Natural killer cell (primary cell): ENCODE measurements at regions of chrX and their contacts with region 1.

Region 1: DNA sequence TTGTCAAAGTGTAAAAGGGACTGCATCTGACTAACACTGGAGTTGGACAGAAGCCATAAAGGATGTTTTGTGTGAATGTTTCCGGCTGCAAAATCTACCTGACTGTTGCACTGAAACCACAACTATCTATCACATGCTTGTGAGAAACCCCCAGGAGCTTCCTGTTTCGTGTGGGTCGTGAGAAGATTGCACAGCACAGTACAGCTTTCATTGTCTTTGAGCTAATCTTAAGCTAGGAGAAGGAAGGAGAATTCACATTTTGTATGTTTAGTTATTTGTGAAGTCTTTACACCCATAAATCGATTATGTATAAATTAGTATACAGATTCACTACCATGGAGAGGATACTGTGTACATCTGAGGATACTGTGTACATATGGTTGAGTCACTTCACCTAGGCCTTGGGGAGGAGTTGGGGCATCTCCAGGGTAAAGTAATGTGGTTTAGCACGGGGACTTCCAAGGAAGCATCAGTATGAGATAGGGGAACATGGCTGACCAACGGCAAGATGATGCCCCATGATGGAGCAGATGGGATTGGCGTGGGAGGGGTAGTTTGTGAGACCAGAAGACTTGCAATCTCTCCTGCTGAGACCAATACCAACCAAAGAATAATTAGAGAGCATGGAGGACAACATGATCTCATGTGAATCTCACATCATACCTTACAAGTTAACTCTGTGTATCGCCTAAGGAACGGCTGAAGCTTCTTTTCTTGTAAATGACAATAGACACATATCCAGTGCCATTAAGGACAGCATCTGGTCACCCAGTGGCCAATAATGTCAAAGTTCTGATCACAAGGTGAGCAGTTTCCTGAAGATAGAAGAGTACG is 43.1 kb upstream of the FAM9C start:
- DNase-seq: peak; percentile 42 to 91
- ATAC-seq: peak; percentile 69 to 86 (median 80)
- H3K4me3 ChIP-seq: no peak overlapping the region
- H3K4me3 Mint-ChIP-seq: peak overlapping the region; percentile 90
- H3K27ac ChIP-seq: peak overlapping the region; percentile 98
- H3K27ac Mint-ChIP-seq: peak overlapping the region; percentile 99
- H3K4me1 ChIP-seq: peaks cover 74% of the 10 kb centered on the region
- H3K4me1 Mint-ChIP-seq: peaks cover 72 to 84% of the 10 kb centered on the region in 2 donors
- H3K27me3 ChIP-seq: no peaks in the 10 kb centered on the region
- H3K27me3 Mint-ChIP-seq: no peaks in the 10 kb centered on the region
- CTCF ChIP-seq: no peak

Region 2: GRCh38 chrX:12955882-12956703 is 131.4 kb before region 1 on chrX:
- intact Hi-C with region 1: loop called (anchors 1 kb)
- DNase-seq: peak; percentile 64 to 77
- ATAC-seq: peak; percentile 54 to 73 (median 67)
- H3K4me3 ChIP-seq: peak overlapping the region; percentile 42
- H3K4me3 Mint-ChIP-seq: peak overlapping the region; percentile 87
- H3K27ac ChIP-seq: peak overlapping the region; percentile 99
- H3K27ac Mint-ChIP-seq: peak overlapping the region; percentile 95 to 96
- H3K4me1 ChIP-seq: peaks cover 85% of the 10 kb centered on the region
- H3K4me1 Mint-ChIP-seq: peaks cover 65 to 66% of the 10 kb centered on the region in 2 donors
- H3K27me3 ChIP-seq: no peaks in the 10 kb centered on the region
- H3K27me3 Mint-ChIP-seq: no peaks in the 10 kb centered on the region
- CTCF ChIP-seq: no peak

Region 3: GRCh38 chrX:13029341-13029740 is 58.2 kb before region 1 on chrX:
- intact Hi-C with region 1: loop called (anchors 10 kb)
- DNase-seq: peak in 1 of 2 donors; percentile 55
- ATAC-seq: no peak
- H3K4me3 ChIP-seq: no peak overlapping the region
- H3K4me3 Mint-ChIP-seq: no peak overlapping the region
- H3K27ac ChIP-seq: no peak overlapping the region
- H3K27ac Mint-ChIP-seq: peak overlapping the region; percentile 52 to 61
- H3K4me1 ChIP-seq: peaks cover 27% of the 10 kb centered on the region
- H3K4me1 Mint-ChIP-seq: peaks cover 42 to 51% of the 10 kb centered on the region in 2 donors
- H3K27me3 ChIP-seq: no peaks in the 10 kb centered on the region
- H3K27me3 Mint-ChIP-seq: peaks cover 0 to 37% of the 10 kb centered on the region in 2 donors
- CTCF ChIP-seq: no peak

Region 4: GRCh38 chrX:13131396-13132137 is 44.0 kb after region 1 on chrX:
- intact Hi-C with region 1: loop called (anchors 5 kb)
- DNase-seq: peak in 1 of 2 donors; percentile 48
- ATAC-seq: peak; percentile 80 to 99 (median 87)
- H3K4me3 ChIP-seq: no peak overlapping the region
- H3K4me3 Mint-ChIP-seq: peak overlapping the region; percentile 67
- H3K27ac ChIP-seq: peak overlapping the region; percentile 13
- H3K27ac Mint-ChIP-seq: peak overlapping the region; percentile 78 to 80
- H3K4me1 ChIP-seq: peaks cover 4% of the 10 kb centered on the region
- H3K4me1 Mint-ChIP-seq: peaks cover 8 to 27% of the 10 kb centered on the region in 2 donors
- H3K27me3 ChIP-seq: no peaks in the 10 kb centered on the region
- H3K27me3 Mint-ChIP-seq: peaks cover 0 to 25% of the 10 kb centered on the region in 2 donors
- CTCF ChIP-seq: no peak

Region 5: GRCh38 chrX:13235930-13236329 is 148.4 kb after region 1 on chrX:
- intact Hi-C with region 1: no loop called
- DNase-seq: no peak
- ATAC-seq: no peak
- H3K4me3 ChIP-seq: no peak overlapping the region
- H3K4me3 Mint-ChIP-seq: no peak overlapping the region
- H3K27ac ChIP-seq: no peak overlapping the region
- H3K27ac Mint-ChIP-seq: no peak overlapping the region
- H3K4me1 ChIP-seq: no peaks in the 10 kb centered on the region
- H3K4me1 Mint-ChIP-seq: no peaks in the 10 kb centered on the region
- H3K27me3 ChIP-seq: no peaks in the 10 kb centered on the region
- H3K27me3 Mint-ChIP-seq: peaks cover 3 to 60% of the 10 kb centered on the region in 2 donors
- CTCF ChIP-seq: no peak

Region 6: DNA sequence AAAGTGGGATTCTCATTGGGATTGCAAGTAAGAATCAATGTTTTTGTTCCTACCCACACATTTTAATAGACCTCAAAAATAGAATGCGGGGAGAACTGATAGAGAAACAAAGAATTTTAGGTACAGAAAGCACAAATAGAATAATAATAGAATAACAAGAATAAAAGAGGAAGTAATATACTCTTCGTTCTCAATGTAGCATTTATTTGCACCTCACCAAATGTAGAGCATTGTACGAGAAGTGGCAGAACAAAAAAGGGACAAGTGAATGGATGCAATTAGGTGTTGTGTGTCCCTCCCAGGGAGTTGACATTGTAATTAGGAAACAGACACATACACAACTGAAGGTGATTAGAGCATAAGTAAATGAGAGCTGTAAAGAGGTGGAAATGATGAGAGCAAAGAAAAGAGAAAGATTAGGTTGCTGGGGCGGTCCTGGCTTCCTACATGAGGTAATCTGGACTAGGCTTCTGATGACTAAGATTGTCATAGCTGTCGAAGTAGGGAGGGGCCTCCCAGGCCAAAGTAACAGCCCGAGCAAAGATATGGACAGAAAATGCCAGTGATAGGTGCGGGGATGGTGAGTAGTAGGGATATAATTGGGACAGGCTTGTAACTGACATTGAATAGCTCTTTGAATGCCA is 611.8 kb after region 1 on chrX:
- intact Hi-C with region 1: loop called (anchors 10 kb)
- DNase-seq: peak in 1 of 2 donors; percentile 18
- ATAC-seq: peak; percentile 59 to 75 (median 71)
- H3K4me3 ChIP-seq: no peak overlapping the region
- H3K4me3 Mint-ChIP-seq: peak overlapping the region; percentile 6
- H3K27ac ChIP-seq: peak overlapping the region; percentile 67
- H3K27ac Mint-ChIP-seq: peak overlapping the region; percentile 71 to 88
- H3K4me1 ChIP-seq: peaks cover 57% of the 10 kb centered on the region
- H3K4me1 Mint-ChIP-seq: peaks cover 71 to 73% of the 10 kb centered on the region in 2 donors
- H3K27me3 ChIP-seq: no peaks in the 10 kb centered on the region
- H3K27me3 Mint-ChIP-seq: no peaks in the 10 kb centered on the region
- CTCF ChIP-seq: no peak